Motor neuron (in vitro differentiated cells): ENCODE measurements at regions of chr20 and their contacts with region 1.

Region 1: GRCh38 chr20:12966468-12967341 is 42.1 kb upstream of the SPTLC3 start:
- ATAC-seq: peak in 4 of 8 experiments; percentile 31 to 61 (median 51)
- H3K4me3 ChIP-seq: no peak overlapping the region
- H3K27ac ChIP-seq: no peak overlapping the region
- H3K4me1 ChIP-seq: peaks cover 10 to 12% of the 10 kb centered on the region in 2 donors

Region 2: GRCh38 chr20:11296951-11297350 is 1669.8 kb before region 1 on chr20:
- in situ Hi-C with region 1: no loop called
- ATAC-seq: peak in 1 of 8 experiments; percentile 28
- H3K4me3 ChIP-seq: no peak overlapping the region
- H3K27ac ChIP-seq: no peak overlapping the region
- H3K4me1 ChIP-seq: peaks cover 4% of the 10 kb centered on the region in 2 donors

Region 3: GRCh38 chr20:13101706-13102105 is 135.0 kb after region 1 on chr20:
- in situ Hi-C with region 1: loop called in 1 of 9 experiments (anchors 5 kb)
- ATAC-seq: no peak
- H3K4me3 ChIP-seq: no peak overlapping the region
- H3K27ac ChIP-seq: no peak overlapping the region
- H3K4me1 ChIP-seq: peaks cover 6 to 9% of the 10 kb centered on the region in 2 donors